CD4-positive, alpha-beta memory T cell (primary cell): ENCODE measurements at regions of chr5 and their contacts with region 1.

Region 1: GRCh38 chr5:154196955-154197652 is 6.6 kb downstream of the GALNT10 start:
- DNase-seq: peak in 1 of 5 donors; percentile 18
- H3K4me3 ChIP-seq: no peak overlapping the region
- H3K4me3 Mint-ChIP-seq: peak overlapping the region in 5 of 8 donors; percentile 0 to 49 (median 43)
- H3K27ac ChIP-seq: peak overlapping the region; percentile 47
- H3K27ac Mint-ChIP-seq: peak overlapping the region; percentile 80 to 95 (median 92)
- H3K4me1 ChIP-seq: peaks cover 63% of the 10 kb centered on the region
- H3K4me1 Mint-ChIP-seq: peaks cover 47 to 90% (median 73%) of the 10 kb centered on the region in 4 donors
- H3K27me3 ChIP-seq: no peaks in the 10 kb centered on the region
- H3K27me3 Mint-ChIP-seq: no peaks in the 10 kb centered on the region

Region 2: DNA sequence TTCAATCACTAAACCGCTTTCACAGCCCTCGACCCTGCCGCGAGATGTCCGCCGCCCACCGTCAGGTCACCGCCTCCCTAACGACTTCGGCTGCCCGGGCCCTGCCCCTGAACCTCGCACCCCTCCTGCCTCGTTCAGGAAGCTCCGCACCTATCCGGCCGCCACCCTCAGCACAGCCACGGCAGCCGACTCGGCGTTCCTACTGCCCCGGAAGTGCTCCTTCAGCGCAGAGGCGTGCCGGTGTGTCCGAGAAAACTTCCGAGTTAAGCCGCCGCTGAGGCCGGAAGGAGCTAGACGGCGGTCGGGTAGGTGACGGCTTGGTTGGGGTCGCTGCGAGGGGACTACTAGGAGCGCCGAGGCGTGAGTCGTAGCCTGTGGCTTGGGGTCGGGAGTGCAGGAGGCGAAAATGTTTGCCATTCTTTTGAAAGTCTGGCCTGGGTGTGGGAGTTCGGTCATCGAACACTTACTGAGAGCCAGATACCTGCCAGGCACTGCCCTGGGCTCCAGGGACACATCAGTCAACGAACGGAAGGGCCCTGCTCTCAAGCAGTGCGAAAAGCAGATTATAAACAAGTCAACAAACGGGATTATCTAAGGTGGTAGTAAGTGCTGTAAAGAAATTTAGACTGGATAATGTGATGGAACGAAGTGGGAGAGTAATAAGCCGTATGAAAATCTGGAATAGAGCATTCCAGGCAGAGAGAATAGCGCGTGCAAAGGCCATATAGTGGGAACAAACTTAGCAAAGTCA is 158.2 kb before region 1 on chr5 and contains the starts of genes FAM114A2 and MFAP3:
- CTCF ChIA-PET with region 1: no interaction called
- POLR2A ChIA-PET with region 1: interaction called, 39 read pairs
- intact Hi-C with region 1: no loop called
- DNase-seq: peak; percentile 85 to 91 (median 86)
- H3K4me3 ChIP-seq: peak within 1 kb of the TSS; percentile 59 to 99
- H3K4me3 Mint-ChIP-seq: peak within 1 kb of the TSS; percentile 92 to 99 (median 98)
- H3K27ac ChIP-seq: peak within 1 kb of the TSS; percentile 72
- H3K27ac Mint-ChIP-seq: peak within 1 kb of the TSS; percentile 91 to 99 (median 98)
- H3K4me1 ChIP-seq: peaks cover 44% of the 10 kb centered on the region
- H3K4me1 Mint-ChIP-seq: peaks cover 39 to 59% (median 51%) of the 10 kb centered on the region in 4 donors
- H3K27me3 ChIP-seq: no peaks in the 10 kb centered on the region
- H3K27me3 Mint-ChIP-seq: no peaks in the 10 kb centered on the region
- total RNA-seq, gene FAM114A2: 39.0 to 45.5 TPM
- total RNA-seq, gene MFAP3: 25.4 to 27.4 TPM

Region 3: DNA sequence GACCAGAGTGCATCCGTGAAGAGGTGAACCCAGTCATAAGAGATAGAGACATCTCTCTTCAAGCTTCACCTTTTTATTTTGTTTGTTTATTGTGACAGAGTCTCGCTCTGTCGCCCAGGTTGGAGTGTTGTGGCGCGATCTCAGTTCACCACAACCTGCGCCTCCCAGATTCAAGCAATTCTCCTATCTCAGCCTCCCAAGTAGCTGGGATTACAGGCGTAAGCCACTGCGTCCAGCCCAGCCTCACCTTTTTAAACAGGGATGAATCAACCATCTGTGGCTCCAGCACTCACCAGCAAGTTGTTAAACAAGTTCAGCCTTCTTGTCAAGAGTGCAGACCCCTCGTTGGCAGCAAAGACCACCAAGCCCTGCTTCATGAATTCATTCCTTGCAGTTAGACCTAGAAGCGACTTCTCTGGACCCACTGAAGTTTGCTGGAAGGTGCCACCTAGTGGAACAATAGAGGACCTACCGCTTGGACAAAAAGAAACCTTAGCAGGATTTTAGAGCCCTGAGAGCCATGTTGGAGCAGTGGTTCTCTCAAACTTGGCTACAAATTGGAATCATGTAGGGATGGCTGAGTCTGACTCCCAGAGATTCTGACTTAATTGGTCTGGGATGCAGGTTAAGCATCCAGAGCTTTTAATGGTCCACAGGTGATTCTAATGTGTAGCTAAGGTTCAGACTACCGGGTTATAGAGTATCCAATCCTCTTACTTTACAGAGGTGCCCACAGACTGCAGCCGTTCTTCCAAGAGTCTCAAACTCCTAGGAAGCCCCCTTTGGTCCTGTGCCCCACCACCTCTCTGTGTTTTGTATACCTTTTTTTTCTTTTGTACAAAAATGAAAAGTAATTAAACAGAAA is 17.0 kb before region 1 on chr5:
- CTCF ChIA-PET with region 1: interaction called, 61 read pairs
- POLR2A ChIA-PET with region 1: interaction called, 3 read pairs
- intact Hi-C with region 1: no loop called
- DNase-seq: peak in 4 of 5 donors; percentile 37 to 52 (median 42)
- H3K4me3 ChIP-seq: no peak overlapping the region
- H3K4me3 Mint-ChIP-seq: no peak overlapping the region
- H3K27ac ChIP-seq: no peak overlapping the region
- H3K27ac Mint-ChIP-seq: no peak overlapping the region
- H3K4me1 ChIP-seq: no peaks in the 10 kb centered on the region
- H3K4me1 Mint-ChIP-seq: peaks cover 0 to 4% (median 2%) of the 10 kb centered on the region in 4 donors
- H3K27me3 ChIP-seq: no peaks in the 10 kb centered on the region
- H3K27me3 Mint-ChIP-seq: peaks cover 2 to 4% of the 10 kb centered on the region in 2 donors

Region 4: DNA sequence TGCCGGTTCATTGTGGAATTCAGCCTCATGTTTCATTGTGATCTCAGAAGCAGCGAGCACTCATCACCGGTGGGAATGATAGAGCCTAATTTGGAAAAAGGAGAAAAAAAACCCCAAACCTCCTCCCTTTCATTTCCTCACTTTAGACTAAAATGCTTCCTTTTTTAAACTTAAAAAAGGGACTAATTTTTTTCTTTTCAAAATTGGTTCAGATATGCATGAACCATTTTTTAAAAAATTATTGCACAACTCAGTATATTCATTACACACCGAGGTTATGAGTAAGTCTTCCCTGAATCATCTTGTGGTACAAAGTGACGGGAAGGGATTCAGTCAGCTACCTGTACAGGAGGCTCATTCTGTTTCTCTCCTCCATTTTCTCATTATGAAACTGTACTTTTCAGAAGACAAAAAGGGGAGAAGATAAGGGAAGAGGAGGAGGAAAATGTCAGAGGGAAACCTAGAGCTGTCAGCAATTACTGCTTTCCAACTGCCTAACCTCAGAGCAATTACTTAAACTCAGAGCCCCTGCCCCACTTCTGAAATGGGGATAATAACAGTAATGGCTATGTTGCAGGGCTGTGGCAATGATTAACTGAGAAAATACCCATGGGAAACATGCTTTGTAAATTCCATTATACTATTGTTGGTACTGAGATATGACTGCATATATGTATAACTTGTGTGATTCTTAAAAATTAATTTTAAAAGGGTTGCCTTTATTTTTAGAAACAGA is 17.4 kb after region 1 on chr5:
- CTCF ChIA-PET with region 1: interaction called, 18 read pairs
- POLR2A ChIA-PET with region 1: interaction called, 24 read pairs
- intact Hi-C with region 1: no loop called
- DNase-seq: no peak
- H3K4me3 ChIP-seq: no peak overlapping the region
- H3K4me3 Mint-ChIP-seq: peak overlapping the region in 2 of 8 donors; percentile 19 to 30
- H3K27ac ChIP-seq: no peak overlapping the region
- H3K27ac Mint-ChIP-seq: peak overlapping the region in 5 of 7 donors; percentile 13 to 79 (median 42)
- H3K4me1 ChIP-seq: peaks cover 27% of the 10 kb centered on the region
- H3K4me1 Mint-ChIP-seq: peaks cover 22 to 68% (median 47%) of the 10 kb centered on the region in 4 donors
- H3K27me3 ChIP-seq: no peaks in the 10 kb centered on the region
- H3K27me3 Mint-ChIP-seq: no peaks in the 10 kb centered on the region

Region 5: GRCh38 chr5:154221371-154221896 is 24.3 kb after region 1 on chr5:
- CTCF ChIA-PET with region 1: interaction called, 18 read pairs
- POLR2A ChIA-PET with region 1: interaction called, 24 read pairs
- intact Hi-C with region 1: no loop called
- DNase-seq: peak; percentile 46 to 73 (median 57)
- H3K4me3 ChIP-seq: no peak overlapping the region
- H3K4me3 Mint-ChIP-seq: peak overlapping the region in 5 of 8 donors; percentile 4 to 77 (median 24)
- H3K27ac ChIP-seq: peak overlapping the region; percentile 42
- H3K27ac Mint-ChIP-seq: peak overlapping the region; percentile 75 to 99 (median 96)
- H3K4me1 ChIP-seq: peaks cover 39% of the 10 kb centered on the region
- H3K4me1 Mint-ChIP-seq: peaks cover 33 to 65% (median 51%) of the 10 kb centered on the region in 4 donors
- H3K27me3 ChIP-seq: no peaks in the 10 kb centered on the region
- H3K27me3 Mint-ChIP-seq: no peaks in the 10 kb centered on the region

Region 6: GRCh38 chr5:154238776-154239481 is 41.8 kb after region 1 on chr5:
- CTCF ChIA-PET with region 1: interaction called, 29 read pairs
- POLR2A ChIA-PET with region 1: interaction called, 10 read pairs
- intact Hi-C with region 1: no loop called
- DNase-seq: no peak
- H3K4me3 ChIP-seq: no peak overlapping the region
- H3K4me3 Mint-ChIP-seq: no peak overlapping the region
- H3K27ac ChIP-seq: no peak overlapping the region
- H3K27ac Mint-ChIP-seq: peak overlapping the region in 2 of 7 donors; percentile 2 to 54
- H3K4me1 ChIP-seq: no peaks in the 10 kb centered on the region
- H3K4me1 Mint-ChIP-seq: peaks cover 16 to 47% (median 30%) of the 10 kb centered on the region in 4 donors
- H3K27me3 ChIP-seq: no peaks in the 10 kb centered on the region
- H3K27me3 Mint-ChIP-seq: no peaks in the 10 kb centered on the region